Activated CD4-positive, alpha-beta T cell treated with anti-CD3 and anti-CD28 coated beads, Interleukin-2, amount 10 ng/mL, durations not matched to agents 7 days and 5 days (primary cell): ENCODE measurements at regions of chr9 and their contacts with region 1.

Region 1: GRCh38 chr9:72022841-72023240 is 37.6 kb downstream of the C9orf57 start:
- DNase-seq: no peak
- H3K4me3 Mint-ChIP-seq: no peak overlapping the region
- H3K27ac Mint-ChIP-seq: no peak overlapping the region
- H3K4me1 Mint-ChIP-seq: peaks cover 9% of the 10 kb centered on the region
- H3K27me3 Mint-ChIP-seq: no peaks in the 10 kb centered on the region

Region 2: DNA sequence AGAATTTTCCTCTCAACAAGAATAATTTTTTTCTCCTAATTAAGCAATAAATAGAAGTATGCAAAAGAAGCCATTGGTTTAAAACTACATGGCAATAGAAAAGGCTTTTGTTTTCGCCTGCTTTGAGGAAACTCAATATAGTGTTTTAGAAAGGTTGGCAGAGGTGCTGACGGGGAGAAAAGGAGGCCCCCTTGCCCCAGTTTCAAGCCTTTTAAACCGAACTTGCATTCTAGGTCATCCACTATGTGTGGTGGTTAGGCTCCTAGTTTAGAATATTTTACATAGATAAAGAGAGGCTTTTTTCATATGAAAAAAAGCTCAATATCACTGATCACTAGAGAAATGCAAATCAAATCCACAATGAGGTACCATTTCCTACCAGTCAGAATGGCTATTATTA is 221.0 kb before region 1 on chr9:
- CTCF ChIA-PET with region 1: interaction called, 42 read pairs
- POLR2A ChIA-PET with region 1: no interaction called
- DNase-seq: no peak
- H3K4me3 Mint-ChIP-seq: no peak overlapping the region
- H3K27ac Mint-ChIP-seq: no peak overlapping the region
- H3K4me1 Mint-ChIP-seq: peaks cover 11% of the 10 kb centered on the region
- H3K27me3 Mint-ChIP-seq: no peaks in the 10 kb centered on the region

Region 3: DNA sequence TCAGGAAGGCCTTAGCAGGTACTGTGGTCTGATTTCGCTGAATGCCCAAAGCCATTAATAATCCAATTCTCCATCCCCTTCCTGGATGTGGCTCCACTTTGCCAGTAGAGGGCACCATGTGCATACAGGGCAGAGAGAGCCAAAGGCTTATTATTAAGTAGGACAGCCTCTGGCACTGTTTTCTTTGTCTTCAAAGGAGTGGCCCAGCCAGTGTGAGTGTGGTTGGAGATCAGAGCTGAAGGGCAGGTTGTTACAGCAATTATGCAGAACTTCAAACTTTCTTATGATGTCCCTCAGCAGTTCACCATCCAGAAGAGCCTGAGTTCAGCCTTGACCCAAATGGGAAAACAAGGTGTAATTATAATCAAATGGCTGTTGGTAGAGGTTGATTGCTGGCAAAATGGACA is 215.9 kb before region 1 on chr9:
- CTCF ChIA-PET with region 1: interaction called, 42 read pairs
- POLR2A ChIA-PET with region 1: no interaction called
- DNase-seq: peak; percentile 75
- H3K4me3 Mint-ChIP-seq: no peak overlapping the region
- H3K27ac Mint-ChIP-seq: peak overlapping the region; percentile 15
- H3K4me1 Mint-ChIP-seq: peaks cover 7% of the 10 kb centered on the region
- H3K27me3 Mint-ChIP-seq: no peaks in the 10 kb centered on the region

Region 4: DNA sequence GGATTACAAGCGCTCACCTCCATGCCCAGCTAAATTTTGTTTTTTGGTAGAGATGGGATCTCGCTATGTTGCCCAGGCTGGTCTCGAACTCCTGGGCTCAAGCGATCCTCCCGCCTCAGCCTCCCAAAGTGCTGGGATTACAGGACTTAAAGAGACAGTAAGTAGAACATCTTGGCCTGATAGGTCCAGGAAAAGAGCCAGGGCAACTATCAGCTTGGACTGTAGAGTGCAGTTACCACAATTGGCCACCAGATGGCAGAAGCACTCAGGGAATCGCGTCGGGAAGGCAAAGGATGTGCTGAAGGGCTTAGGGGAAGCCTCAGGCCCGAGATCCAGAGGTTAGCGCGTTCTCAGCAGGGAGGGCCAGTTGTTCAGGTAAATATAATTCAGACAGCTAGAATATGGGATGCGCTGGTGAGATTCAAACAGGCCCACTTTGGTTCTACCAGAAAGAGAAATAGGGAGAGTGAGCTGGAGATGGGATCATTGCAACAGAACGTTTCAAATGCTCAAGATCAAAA is 16.1 kb after region 1 on chr9:
- CTCF ChIA-PET with region 1: interaction called, 11 read pairs
- POLR2A ChIA-PET with region 1: no interaction called
- DNase-seq: peak; percentile 65
- H3K4me3 Mint-ChIP-seq: no peak overlapping the region
- H3K27ac Mint-ChIP-seq: no peak overlapping the region
- H3K4me1 Mint-ChIP-seq: peaks cover 2% of the 10 kb centered on the region
- H3K27me3 Mint-ChIP-seq: peaks cover 10% of the 10 kb centered on the region